ENCODE measurements at regions of chr12 and their contacts with region 1.

Region 1: GRCh38 chr12:112382232-112382796 is at the start of gene HECTD4:
- DNase-seq: peak; percentile 87 to 91
- ATAC-seq: peak; percentile 95 to 98
- H3K4me3 ChIP-seq: peak within 1 kb of the TSS; percentile 100
- H3K27ac ChIP-seq: peak within 1 kb of the TSS; percentile 84 to 94
- H3K4me1 ChIP-seq: peaks cover 5% of the 10 kb centered on the region; the same call in 2 of the 3 replicates
- CTCF ChIP-seq: no peak
- EP300 ChIP-seq: no peak
- POLR2A ChIP-seq: peak; percentile 98
- RAD21 ChIP-seq: no peak
- polyA plus RNA-seq, gene HECTD4: 14.7 and 21.4 TPM in 2 replicates

Region 2: DNA sequence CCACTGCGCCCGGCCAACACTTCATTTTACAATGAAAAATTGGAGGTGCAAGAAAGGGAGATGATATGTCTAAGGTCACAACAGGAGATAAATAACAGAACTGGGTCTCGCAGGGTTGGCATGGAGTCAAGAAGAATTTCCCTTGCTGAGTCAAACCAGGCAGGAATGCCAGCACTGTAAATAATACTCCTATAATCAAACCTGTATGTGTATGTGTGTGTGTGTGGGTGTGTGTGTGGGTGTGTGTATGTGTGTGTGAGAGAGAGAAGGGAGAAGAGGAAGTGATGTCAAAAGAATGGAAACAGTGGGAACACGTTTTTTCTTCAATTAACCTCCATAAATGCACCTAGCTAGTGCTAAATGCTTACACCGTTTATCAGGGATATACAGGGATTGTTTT is 439.8 kb before region 1 on chr12:
- CTCF ChIA-PET with region 1: interaction called, 15 read pairs
- POLR2A ChIA-PET with region 1: no interaction called
- DNase-seq: peak in 1 of 2 experiments; percentile 67
- ATAC-seq: peak in 1 of 2 experiments; percentile 46; a peak in 3 of 6 replicates
- H3K4me3 ChIP-seq: no peak overlapping the region
- H3K27ac ChIP-seq: no peak overlapping the region
- H3K4me1 ChIP-seq: peaks cover 8% of the 10 kb centered on the region; the same call in 2 of the 3 replicates
- CTCF ChIP-seq: no peak
- EP300 ChIP-seq: no peak
- POLR2A ChIP-seq: no peak
- RAD21 ChIP-seq: no peak

Region 3: DNA sequence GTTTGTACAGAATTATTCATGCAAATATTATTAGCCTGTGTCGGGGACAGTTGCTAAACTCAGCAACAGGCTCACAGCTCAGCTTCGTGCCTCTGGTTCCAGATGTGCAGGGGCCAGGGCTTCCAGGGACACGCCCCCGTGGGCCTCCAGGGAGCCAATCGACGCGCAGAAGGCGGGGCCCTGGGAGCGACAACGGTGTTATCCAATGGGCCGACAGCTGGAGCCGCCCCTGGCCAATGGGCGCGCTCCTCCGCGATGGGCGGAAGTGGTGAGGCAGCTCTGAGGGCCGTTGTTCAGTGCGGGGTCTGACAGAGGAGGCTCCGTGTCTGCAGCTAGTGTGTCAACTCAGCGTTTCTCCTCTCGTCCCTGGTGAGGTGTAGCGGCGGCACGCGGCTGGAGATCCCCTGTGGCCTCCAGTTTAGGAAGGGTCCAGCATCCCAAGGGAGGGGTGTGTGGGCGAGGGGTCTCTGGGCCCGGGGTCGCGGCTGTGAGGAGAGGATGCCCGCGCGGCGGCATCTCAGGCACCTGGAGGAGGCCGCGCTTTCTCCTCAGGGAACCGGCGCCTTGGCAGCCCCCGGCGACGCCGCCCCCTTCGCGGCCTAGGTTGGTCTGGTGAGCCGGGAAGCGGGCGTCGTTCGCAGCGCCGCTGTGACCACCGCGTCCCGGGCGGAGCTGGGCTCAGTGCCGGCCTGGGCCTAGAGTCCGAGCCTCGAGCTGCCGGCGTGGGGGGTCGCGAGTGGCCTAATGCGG is 256.9 kb before region 1 on chr12 and contains the start of gene TRAFD1:
- CTCF ChIA-PET with region 1: interaction called, 10 read pairs
- POLR2A ChIA-PET with region 1: no interaction called
- DNase-seq: peak; percentile 97 to 99
- ATAC-seq: peak; percentile 99 to 100
- H3K4me3 ChIP-seq: peak within 1 kb of the TSS; percentile 78
- H3K27ac ChIP-seq: peak within 1 kb of the TSS; percentile 75 to 86
- H3K4me1 ChIP-seq: peaks cover 60% of the 10 kb centered on the region
- CTCF ChIP-seq: no peak
- EP300 ChIP-seq: no peak
- POLR2A ChIP-seq: peak; percentile 97
- RAD21 ChIP-seq: no peak
- polyA plus RNA-seq, gene TRAFD1: 23.3 and 33.1 TPM in 2 replicates

Region 4: GRCh38 chr12:112190648-112191047 is 191.7 kb before region 1 on chr12:
- CTCF ChIA-PET with region 1: interaction called, 80 read pairs
- POLR2A ChIA-PET with region 1: no interaction called
- DNase-seq: no peak
- ATAC-seq: peak in 1 of 2 experiments; percentile 60; a peak in 3 of 6 replicates
- H3K4me3 ChIP-seq: no peak overlapping the region
- H3K27ac ChIP-seq: no peak overlapping the region
- H3K4me1 ChIP-seq: no peaks in the 10 kb centered on the region
- CTCF ChIP-seq: no peak
- EP300 ChIP-seq: no peak
- POLR2A ChIP-seq: no peak
- RAD21 ChIP-seq: no peak

Region 5: GRCh38 chr12:112198120-112198733 is 184.1 kb before region 1 on chr12:
- CTCF ChIA-PET with region 1: interaction called, 80 read pairs
- POLR2A ChIA-PET with region 1: interaction called, 3 read pairs
- DNase-seq: peak; percentile 75 to 81
- ATAC-seq: peak; percentile 97 to 98
- H3K4me3 ChIP-seq: no peak overlapping the region
- H3K27ac ChIP-seq: no peak overlapping the region
- H3K4me1 ChIP-seq: no peaks in the 10 kb centered on the region
- CTCF ChIP-seq: peak; percentile 71
- EP300 ChIP-seq: no peak
- POLR2A ChIP-seq: no peak
- RAD21 ChIP-seq: peak; percentile 60 to 77

Region 6: GRCh38 chr12:112353389-112353788 is 28.9 kb before region 1 on chr12:
- CTCF ChIA-PET with region 1: interaction called, 18 read pairs
- POLR2A ChIA-PET with region 1: no interaction called
- DNase-seq: peak in 1 of 2 experiments; percentile 37
- ATAC-seq: no peak; a peak in 1 of 6 replicates
- H3K4me3 ChIP-seq: no peak overlapping the region
- H3K27ac ChIP-seq: no peak overlapping the region
- H3K4me1 ChIP-seq: peaks cover 15% of the 10 kb centered on the region; the same call in 1 of the 3 replicates
- CTCF ChIP-seq: no peak
- EP300 ChIP-seq: no peak
- POLR2A ChIP-seq: no peak
- RAD21 ChIP-seq: no peak

Region 7: GRCh38 chr12:112401903-112402498 is 19.7 kb after region 1 on chr12:
- CTCF ChIA-PET with region 1: interaction called, 24 read pairs
- POLR2A ChIA-PET with region 1: interaction called, 3 read pairs
- DNase-seq: no peak
- ATAC-seq: peak; percentile 50 to 57; a peak in 4 of 6 replicates
- H3K4me3 ChIP-seq: no peak overlapping the region
- H3K27ac ChIP-seq: no peak overlapping the region
- H3K4me1 ChIP-seq: peaks cover 9% of the 10 kb centered on the region
- CTCF ChIP-seq: no peak
- EP300 ChIP-seq: no peak
- POLR2A ChIP-seq: no peak
- RAD21 ChIP-seq: no peak

Region 8: DNA sequence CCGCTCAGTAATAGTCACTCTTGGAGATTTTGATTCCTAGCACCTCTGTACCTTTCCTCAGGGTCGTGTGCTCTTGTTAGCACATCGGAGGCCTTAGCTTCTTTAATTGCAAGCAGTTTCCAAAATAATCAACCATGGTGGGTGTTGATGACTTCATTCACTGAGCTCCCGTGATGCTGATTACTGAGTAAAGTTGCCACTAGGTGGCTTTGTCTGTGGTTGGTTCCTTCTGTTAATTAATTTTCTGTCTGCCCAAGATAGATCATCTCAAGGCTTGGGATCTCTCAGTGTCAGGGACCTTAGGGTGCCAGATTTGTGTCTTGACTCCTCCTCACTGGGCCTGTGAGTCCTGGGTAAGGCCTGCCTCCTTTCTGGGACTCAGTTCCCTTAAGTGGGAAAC is 90.7 kb after region 1 on chr12:
- CTCF ChIA-PET with region 1: no interaction called
- POLR2A ChIA-PET with region 1: no interaction called
- DNase-seq: peak; percentile 17 to 33
- ATAC-seq: peak in 1 of 2 experiments; percentile 61; a peak in 3 of 6 replicates
- H3K4me3 ChIP-seq: no peak overlapping the region
- H3K27ac ChIP-seq: no peak overlapping the region
- H3K4me1 ChIP-seq: no peaks in the 10 kb centered on the region
- CTCF ChIP-seq: peak; percentile 29; the same call in 2 of the 3 replicates
- EP300 ChIP-seq: no peak
- POLR2A ChIP-seq: no peak
- RAD21 ChIP-seq: peak; percentile 13 to 26; a peak in 1 of 5 replicates

Measured in A549 (cell line).